Dorsolateral prefrontal cortex (tissue), 120 donors: ENCODE measurements at regions of chr3 and their contacts with region 1.

Region 1: DNA sequence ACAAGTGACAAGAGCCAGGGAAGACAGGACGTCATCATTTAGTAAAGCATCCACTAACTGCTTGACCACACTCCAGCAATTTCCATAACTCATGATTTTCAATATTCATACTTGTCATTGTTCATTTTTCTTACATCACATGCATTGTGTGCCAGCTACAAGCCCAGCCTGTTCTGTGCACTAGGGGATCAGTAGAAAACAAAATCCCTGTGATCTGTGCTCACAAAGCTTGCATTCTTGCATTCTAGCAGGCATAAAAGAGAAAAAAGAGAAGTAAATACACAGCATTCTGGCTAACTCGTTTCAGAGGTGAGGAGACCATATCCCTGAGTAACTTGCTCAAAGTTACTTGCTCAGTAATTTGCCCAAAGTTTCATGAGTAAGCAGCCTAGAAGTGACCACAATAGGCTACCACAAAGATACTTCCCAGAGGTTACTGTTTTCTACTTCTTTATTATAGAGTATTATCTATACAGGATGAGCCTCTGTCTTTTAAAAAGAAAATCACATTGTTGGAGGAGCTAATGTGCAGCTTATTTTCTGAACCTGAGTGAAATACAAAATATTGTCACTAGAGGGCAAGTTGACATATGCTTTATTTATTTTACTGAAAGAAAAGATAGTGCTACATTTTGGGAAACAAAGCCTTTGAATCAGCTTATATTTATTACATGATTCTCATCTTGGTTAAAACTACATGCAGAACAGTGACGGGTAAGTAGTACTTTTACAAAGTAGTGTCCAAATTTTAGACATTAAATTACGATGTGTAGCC is 701.4 kb upstream of the LMCD1 start:
- DNase-seq: no peak
- H3K4me3 ChIP-seq: peak overlapping the region in 7 of 59 donors; percentile 7 to 33 (median 21)
- H3K27ac ChIP-seq: peak overlapping the region in 10 of 59 donors; percentile 3 to 68 (median 22)
- H3K27me3 ChIP-seq: no peaks in the 10 kb centered on the region
- CTCF ChIP-seq: peak in 55 of 56 donors; percentile 27 to 65 (median 50)

Region 2: GRCh38 chr3:7744850-7745249 is 55.3 kb before region 1 on chr3:
- intact Hi-C with region 1: no loop called
- DNase-seq: no peak
- H3K4me3 ChIP-seq: no peak overlapping the region
- H3K27ac ChIP-seq: no peak overlapping the region
- H3K27me3 ChIP-seq: no peaks in the 10 kb centered on the region
- CTCF ChIP-seq: no peak

Region 3: GRCh38 chr3:7897655-7898054 is 97.5 kb after region 1 on chr3:
- intact Hi-C with region 1: loop called in 1 of 2 experiments (anchors 10 kb)
- DNase-seq: peak in 1 of 10 donors; percentile 44
- H3K4me3 ChIP-seq: no peak overlapping the region
- H3K27ac ChIP-seq: peak overlapping the region in 17 of 59 donors; percentile 0 to 76 (median 62)
- H3K27me3 ChIP-seq: no peaks in the 10 kb centered on the region
- CTCF ChIP-seq: peak in 22 of 56 donors; percentile 9 to 41 (median 24)